ENCODE measurements at regions of chr19 and their contacts with region 1.

Region 1: DNA sequence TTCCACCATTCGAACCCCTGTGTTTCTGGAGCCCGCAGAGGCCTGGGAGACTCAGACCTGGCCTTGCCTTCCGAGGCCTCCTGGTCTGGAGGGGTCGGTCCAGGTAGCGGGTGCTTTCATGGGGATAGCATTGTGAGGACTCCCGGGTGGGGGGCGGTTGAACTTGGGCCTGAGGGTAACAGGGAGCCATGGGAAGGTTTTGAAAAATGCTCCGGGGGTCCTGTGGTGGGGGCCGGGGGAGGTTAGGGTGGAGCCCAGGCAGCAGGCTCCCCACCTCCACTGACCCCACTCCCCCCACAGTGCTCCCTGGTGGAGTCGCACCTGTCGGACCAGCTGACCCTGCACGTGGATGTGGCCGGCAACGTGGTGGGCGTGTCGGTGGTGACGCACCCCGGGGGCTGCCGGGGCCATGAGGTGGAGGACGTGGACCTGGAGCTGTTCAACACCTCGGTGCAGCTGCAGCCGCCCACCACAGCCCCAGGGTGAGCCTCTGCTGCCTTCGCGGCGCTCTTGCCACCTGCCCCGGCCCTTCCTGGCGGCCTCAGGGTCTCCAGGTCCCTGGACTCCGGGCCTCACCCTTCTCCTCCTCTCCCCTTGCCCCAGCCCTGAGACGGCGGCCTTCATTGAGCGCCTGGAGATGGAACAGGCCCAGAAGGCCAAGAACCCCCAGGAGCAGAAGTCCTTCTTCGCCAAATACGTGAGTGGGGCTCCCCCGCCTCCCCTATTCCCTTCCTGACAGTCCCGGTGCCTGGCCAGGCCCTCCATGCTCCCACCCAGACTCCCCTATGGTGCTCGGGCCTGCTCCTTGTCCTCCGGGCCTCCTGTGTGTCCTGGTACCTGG is 3.9 kb upstream of the GARIN5A start:
- DNase-seq: no peak
- H3K4me3 ChIP-seq: no peak overlapping the region
- H3K27me3 ChIP-seq: no peaks in the 10 kb centered on the region
- CTCF ChIP-seq: no peak

Region 2: DNA sequence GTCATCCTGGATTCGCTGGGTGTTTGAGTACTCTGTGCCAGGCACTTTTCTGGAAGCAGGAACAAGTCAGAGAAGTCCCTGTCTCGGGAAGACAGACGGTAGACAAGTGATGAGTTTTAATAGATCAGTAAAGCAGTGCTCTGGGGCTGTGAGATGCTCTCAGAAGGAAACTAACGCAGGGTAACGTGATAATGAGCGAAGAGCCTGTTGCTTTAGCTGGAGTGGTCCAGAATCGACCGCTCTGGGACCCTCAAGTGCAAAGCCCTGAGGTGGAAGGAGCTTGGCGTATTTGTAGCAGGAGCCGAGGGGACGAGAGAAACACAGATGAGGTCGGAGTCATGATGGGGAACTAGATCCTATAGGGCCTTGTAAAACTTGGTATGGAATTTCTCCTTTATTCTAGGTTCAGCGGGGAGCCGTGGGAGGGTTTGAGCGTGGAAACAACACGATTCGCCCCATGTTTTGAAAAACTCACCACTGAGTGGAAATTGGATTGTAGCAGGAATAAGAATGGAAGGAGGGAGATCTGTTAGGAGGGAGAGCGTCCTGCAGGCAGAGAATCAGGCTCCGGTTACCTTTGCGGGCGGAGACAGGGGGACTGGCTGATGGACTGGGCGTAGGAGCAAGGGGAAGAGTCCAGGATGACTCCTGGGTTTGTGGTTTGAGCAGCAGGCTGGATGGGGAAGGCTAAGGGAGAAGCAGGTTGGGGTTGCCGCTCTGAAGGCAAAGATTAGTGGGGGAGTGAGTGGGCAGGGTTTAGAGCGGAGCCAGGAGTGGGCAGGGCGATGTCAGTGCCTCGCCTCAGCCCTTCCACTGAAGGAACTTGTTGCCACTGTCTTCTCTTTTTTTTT is 95.6 kb before region 1 on chr19:
- CTCF ChIA-PET with region 1: no interaction called
- POLR2A ChIA-PET with region 1: interaction called, 11 read pairs
- DNase-seq: no peak
- H3K4me3 ChIP-seq: peak overlapping the region; percentile 77
- H3K27me3 ChIP-seq: no peaks in the 10 kb centered on the region
- CTCF ChIP-seq: no peak